ENCODE measurements at regions of chr2 and their contacts with region 1.

Region 1: DNA sequence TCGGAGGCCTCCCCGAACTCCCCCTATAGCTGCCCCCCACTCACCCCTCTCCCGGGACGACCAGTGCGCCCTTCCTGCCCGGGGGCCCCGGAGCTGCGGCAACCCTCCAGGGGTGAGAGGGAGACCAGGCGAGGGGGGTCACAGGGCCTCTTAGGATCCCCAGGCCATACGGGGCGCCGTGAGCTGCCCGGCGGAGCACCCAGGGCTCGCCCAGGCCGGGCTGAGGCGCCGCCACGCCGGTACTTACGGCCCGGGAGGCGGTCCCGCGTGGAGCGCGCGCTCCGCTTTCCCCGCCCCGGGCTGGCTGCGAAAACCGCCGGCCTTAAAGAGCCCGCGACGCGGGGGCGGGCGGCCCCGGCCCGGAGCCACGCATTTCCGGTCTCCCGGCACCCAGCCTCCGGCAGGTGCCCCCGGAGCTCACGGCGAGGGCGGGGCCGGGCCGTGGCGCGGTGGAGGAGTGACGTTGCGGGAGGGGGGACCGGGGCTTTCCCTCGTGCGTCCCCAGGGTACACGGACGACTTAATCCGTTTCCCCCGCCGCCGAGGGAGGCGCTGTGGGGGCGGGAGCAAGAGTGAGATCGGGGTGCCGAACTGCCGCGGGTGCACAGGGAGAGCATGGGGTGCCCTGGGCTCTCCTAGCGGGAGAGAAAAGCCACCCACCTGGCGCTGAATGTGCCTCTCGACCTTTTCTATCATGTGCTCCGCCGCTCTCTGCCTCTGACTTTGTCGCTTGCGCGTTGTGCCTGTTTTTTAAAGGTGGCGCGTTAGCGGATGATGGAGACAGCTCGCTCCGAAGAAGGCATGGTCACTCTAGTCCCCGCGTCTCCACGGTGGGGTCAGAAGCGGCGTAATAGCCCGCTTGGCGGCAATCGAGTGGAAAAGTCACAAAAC is at the start of gene METTL21A:
- DNase-seq: peak; percentile 86
- H3K4me3 ChIP-seq: peak within 1 kb of the TSS; percentile 62 to 84 (median 65)
- H3K27ac ChIP-seq: peak within 1 kb of the TSS; percentile 65
- H3K4me1 ChIP-seq: peaks cover 15% of the 10 kb centered on the region
- H3K27me3 ChIP-seq: no peaks in the 10 kb centered on the region
- CTCF ChIP-seq: peak in 1 of 2 donors; percentile 56
- total RNA-seq, gene METTL21A: 8.7 to 9.0 TPM

Region 2: GRCh38 chr2:207710814-207711740 is 85.8 kb after region 1 on chr2 and contains the start of gene CCNYL1:
- CTCF ChIA-PET with region 1: no interaction called
- dilution Hi-C with region 1: no loop called
- in situ Hi-C with region 1: loop called (anchors 10 kb)
- intact Hi-C with region 1: loop called (anchors 2 kb)
- DNase-seq: peak; percentile 99
- H3K4me3 ChIP-seq: peak within 1 kb of the TSS; percentile 88 to 93 (median 91)
- H3K27ac ChIP-seq: peak within 1 kb of the TSS; percentile 73
- H3K4me1 ChIP-seq: peaks cover 27% of the 10 kb centered on the region
- H3K27me3 ChIP-seq: no peaks in the 10 kb centered on the region
- CTCF ChIP-seq: peak in 1 of 2 donors; percentile 13
- total RNA-seq, gene CCNYL1: 11.2 to 30.0 TPM

Region 3: GRCh38 chr2:207725873-207726578 is 100.8 kb after region 1 on chr2:
- CTCF ChIA-PET with region 1: interaction called, 7 read pairs
- dilution Hi-C with region 1: no loop called
- in situ Hi-C with region 1: no loop called
- intact Hi-C with region 1: loop called (anchors 2 kb)
- DNase-seq: peak; percentile 27
- H3K4me3 ChIP-seq: no peak overlapping the region
- H3K27ac ChIP-seq: no peak overlapping the region
- H3K4me1 ChIP-seq: peaks cover 28% of the 10 kb centered on the region
- H3K27me3 ChIP-seq: no peaks in the 10 kb centered on the region
- CTCF ChIP-seq: no peak

Region 4: DNA sequence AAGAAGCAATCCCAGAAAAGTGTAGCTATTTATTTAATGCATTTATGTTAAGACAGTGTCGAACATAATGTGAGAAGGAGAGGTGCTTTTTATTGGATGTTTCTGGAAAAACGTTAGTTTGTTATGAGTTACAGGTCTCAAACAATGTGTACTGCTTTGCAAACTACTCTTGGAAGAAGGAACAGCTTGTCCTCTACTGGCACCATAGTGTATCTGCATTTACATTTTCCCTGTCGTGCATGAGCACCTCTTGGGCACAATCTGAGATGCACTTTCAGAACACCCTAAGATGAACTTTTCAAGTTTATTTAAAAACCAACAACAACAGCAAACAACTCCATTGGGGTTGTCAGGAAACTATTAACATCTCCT is 109.0 kb after region 1 on chr2:
- CTCF ChIA-PET with region 1: no interaction called
- dilution Hi-C with region 1: no loop called
- in situ Hi-C with region 1: no loop called
- intact Hi-C with region 1: loop called (anchors 1 kb)
- DNase-seq: no peak
- H3K4me3 ChIP-seq: no peak overlapping the region
- H3K27ac ChIP-seq: no peak overlapping the region
- H3K4me1 ChIP-seq: no peaks in the 10 kb centered on the region
- H3K27me3 ChIP-seq: no peaks in the 10 kb centered on the region
- CTCF ChIP-seq: peak; percentile 41 to 64

Region 5: GRCh38 chr2:208072250-208072892 is 447.1 kb after region 1 on chr2:
- CTCF ChIA-PET with region 1: no interaction called
- dilution Hi-C with region 1: no loop called
- in situ Hi-C with region 1: no loop called
- intact Hi-C with region 1: loop called (anchors 10 kb)
- DNase-seq: peak; percentile 43
- H3K4me3 ChIP-seq: no peak overlapping the region
- H3K27ac ChIP-seq: no peak overlapping the region
- H3K4me1 ChIP-seq: no peaks in the 10 kb centered on the region
- H3K27me3 ChIP-seq: no peaks in the 10 kb centered on the region
- CTCF ChIP-seq: peak; percentile 70 to 87

Region 6: DNA sequence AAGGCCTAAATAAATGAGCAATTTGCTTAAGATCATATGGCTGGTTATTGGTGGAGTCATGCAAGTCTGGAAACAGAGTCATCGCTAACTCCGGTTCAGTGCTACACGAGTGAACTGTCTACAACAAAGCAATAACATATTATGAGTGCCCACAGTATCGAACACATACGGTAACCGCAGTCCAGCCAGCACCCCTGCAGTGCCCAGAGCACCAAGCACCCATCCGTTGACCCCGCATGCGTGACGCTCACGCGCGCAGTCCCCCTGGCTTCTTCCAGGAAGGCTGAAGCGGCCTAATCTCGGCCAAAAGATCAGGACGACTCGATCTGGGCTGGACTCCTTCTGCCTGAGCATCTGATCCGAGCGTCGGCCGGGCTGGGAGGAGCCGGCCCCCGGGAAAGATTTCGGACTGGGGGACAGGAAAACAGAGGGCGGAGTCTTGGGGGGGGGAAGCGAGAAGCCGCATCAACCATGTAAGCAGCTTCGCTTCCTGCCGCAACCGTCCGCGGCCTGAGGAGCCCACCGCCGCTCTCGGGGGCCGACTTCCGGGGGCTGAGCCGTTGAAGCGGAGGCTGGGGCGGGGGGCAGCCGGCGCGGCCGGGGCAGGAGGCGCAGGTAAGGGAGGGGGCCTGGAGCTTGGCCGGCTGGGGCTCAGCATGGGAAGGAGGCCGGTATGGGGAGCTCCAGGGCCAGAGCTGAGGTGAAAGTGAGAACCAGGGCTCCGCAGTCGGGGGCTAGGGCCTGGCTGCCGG is 640.7 kb after region 1 on chr2 and contains the start of gene PIKFYVE:
- CTCF ChIA-PET with region 1: no interaction called
- dilution Hi-C with region 1: no loop called
- in situ Hi-C with region 1: no loop called
- intact Hi-C with region 1: loop called (anchors 10 kb)
- DNase-seq: peak; percentile 98
- H3K4me3 ChIP-seq: peak within 1 kb of the TSS; percentile 61 to 83 (median 83)
- H3K27ac ChIP-seq: peak within 1 kb of the TSS; percentile 71
- H3K4me1 ChIP-seq: peaks cover 16% of the 10 kb centered on the region
- H3K27me3 ChIP-seq: no peaks in the 10 kb centered on the region
- CTCF ChIP-seq: peak in 1 of 2 donors; percentile 1
- total RNA-seq, gene PIKFYVE: 31.9 to 44.2 TPM

Measured in mammary epithelial cell (primary cell).